ENCODE measurements at regions of chr11 and their contacts with region 1.

Region 1: DNA sequence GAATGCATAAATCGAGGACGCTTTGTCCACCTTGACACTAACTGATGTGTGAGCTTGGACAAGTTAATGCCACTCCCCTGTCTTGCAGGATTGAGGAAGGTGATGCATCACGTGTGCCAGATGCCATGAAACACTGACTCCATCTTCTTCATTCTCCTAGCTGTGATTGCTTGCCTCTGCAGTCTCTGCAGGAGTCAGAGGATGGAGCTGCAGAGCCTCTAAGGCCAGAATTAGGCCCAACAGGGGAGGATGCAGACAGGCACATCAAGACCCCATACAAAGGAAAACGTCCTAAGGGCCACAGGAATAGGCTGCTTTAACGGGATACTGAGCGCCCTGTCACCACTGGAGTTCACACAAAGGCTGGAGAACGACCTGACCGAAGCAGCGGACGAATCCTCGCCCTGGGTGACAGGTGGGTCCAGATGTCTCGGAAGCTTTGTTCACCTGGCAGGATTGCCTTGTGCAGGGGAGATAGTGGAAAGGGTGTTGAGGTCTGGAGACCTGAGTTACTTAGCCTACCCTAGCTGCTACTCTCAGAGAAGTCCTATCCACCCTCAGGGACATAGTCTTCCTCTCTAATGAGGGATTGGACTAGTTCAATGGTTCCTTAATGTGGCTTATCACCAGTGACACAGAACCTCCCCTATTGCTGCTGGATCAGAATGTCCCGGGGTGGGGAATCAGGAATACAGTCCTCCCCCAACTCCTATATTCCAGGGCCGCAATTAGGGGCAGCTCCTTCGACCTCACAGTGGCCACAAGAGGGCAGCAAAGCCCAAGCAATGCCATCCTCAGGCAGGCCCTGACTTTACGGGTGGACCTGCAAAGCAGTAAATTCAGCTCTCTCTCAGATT is 32.4 kb downstream of the DBX1 start:
- DNase-seq: peak; percentile 68
- H3K4me3 ChIP-seq: no peak overlapping the region
- H3K27ac ChIP-seq: no peak overlapping the region
- H3K4me1 ChIP-seq: no peaks in the 10 kb centered on the region
- H3K27me3 ChIP-seq: no peaks in the 10 kb centered on the region
- CTCF ChIP-seq: peak; percentile 73

Region 2: DNA sequence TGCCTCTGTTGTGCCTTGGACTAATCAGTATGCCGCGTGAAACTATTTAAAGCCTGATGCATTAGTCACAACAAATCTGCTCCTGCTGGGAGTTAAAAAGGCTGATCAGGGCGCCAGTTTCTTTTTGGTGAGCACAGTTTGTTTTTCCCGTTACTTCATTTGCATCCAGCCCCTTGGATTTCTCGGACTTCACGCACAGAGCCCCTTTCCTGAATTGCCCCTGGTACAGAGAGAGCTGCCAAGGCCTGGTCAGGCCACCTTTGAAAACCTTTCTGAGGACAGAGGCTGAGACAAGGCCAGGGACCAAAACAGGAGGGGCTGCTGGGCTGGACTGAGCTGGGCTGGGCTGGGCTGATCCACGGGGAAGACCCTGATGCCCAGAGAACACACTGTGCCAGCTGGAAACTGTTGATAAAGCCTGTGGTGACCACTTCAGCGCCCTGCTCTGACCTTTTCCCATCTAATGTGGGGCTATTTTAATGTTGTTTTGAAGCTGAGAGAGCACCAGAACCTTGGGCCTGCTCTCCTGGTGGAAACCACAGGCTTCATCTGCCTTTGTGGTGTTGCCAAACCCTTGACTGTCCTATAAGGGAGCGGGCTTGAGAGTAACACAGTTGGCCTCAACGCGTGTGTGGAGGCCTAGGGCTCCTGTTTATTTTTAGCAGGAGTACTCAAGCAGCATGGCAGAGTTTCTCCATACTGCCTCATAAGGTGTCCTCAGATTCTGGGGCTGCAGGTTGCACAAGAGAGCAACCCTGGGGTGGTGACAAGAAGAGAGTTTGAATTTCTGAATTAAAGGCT is 371.0 kb before region 1 on chr11:
- CTCF ChIA-PET with region 1: no interaction called
- POLR2A ChIA-PET with region 1: no interaction called
- intact Hi-C with region 1: no loop called
- DNase-seq: no peak
- H3K4me3 ChIP-seq: no peak overlapping the region
- H3K27ac ChIP-seq: no peak overlapping the region
- H3K4me1 ChIP-seq: no peaks in the 10 kb centered on the region
- H3K27me3 ChIP-seq: no peaks in the 10 kb centered on the region
- CTCF ChIP-seq: no peak

Region 3: DNA sequence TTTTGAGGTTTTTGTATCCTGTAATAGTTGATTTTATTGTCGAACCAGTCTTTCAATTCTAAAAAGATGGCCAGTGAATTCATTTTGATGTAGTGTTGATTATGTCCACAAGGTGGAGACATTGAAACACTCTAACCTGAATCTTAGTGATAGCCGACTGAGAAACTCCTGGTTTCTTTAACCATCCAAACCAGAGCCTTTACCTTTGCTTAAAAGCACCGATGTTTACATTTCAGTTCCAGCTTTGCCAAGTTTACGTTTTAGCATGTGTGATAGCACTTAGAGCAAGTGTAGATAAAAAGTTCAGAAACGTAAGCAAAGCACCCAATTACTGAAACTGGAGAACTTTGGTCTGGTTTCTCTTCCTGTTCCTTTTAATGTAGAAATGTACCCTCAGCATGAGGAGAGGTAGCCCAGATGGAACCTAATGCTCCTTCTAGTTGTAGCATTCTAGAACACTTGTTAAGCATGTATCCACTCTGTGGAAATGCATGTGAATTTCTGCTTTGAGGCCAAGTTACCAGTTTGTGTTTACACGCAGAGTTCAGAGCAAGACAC is 176.3 kb before region 1 on chr11:
- CTCF ChIA-PET with region 1: interaction called, 3 read pairs
- POLR2A ChIA-PET with region 1: no interaction called
- intact Hi-C with region 1: loop called (anchors 5 kb)
- DNase-seq: peak; percentile 46
- H3K4me3 ChIP-seq: no peak overlapping the region
- H3K27ac ChIP-seq: no peak overlapping the region
- H3K4me1 ChIP-seq: no peaks in the 10 kb centered on the region
- H3K27me3 ChIP-seq: peaks cover 21% of the 10 kb centered on the region
- CTCF ChIP-seq: peak; percentile 62

Region 4: DNA sequence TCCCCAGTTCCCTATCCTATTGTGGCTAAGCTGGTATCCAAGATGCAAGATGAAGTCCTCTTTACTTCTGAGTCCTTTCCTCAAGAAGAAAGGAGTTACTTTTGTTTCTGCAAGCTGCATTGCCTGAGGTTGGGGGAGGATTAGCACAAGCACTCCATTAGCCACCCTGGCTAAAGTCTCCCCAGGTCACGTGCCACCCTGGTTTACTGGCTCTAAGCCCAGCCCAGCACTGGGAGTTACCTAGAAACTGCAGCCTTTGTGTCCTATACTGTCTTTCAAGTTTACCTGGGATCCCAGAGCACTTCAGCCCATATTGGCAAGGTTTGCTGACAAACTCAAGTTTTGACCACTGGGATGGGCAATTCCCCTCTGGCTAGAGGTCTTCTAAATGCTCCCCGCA is 110.8 kb after region 1 on chr11:
- CTCF ChIA-PET with region 1: no interaction called
- POLR2A ChIA-PET with region 1: no interaction called
- intact Hi-C with region 1: no loop called
- DNase-seq: no peak
- H3K4me3 ChIP-seq: no peak overlapping the region
- H3K27ac ChIP-seq: no peak overlapping the region
- H3K4me1 ChIP-seq: no peaks in the 10 kb centered on the region
- H3K27me3 ChIP-seq: no peaks in the 10 kb centered on the region
- CTCF ChIP-seq: no peak

Region 5: DNA sequence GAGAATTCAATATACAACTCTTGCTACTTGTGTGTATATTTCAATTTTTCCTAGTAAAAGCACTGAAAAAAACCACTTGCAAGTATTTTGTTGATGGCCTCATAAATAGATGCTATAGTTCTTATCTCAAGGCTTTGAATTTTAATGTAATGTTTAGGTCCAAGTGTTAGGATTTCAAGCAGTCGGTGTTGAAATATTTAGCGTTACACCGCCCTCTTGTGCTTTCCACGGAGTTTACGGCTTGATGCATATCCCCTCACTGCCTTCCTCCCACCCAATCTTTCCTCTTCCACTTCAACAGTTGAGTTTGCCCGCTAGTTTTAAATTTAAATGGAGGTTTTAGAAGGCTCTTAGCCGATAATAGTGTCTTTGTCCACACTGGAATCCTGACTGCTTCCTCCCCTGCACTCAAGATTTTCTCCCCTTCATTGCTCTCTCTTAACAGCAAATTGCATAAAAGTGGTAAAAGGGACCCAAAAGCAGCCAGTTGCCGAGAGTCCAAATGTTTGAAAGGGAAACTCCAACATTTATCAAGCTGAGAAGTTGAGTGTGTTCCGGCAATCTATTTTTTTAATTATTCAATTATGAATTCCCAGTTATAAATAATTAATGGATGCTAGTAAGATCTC is 209.7 kb after region 1 on chr11:
- CTCF ChIA-PET with region 1: no interaction called
- POLR2A ChIA-PET with region 1: no interaction called
- intact Hi-C with region 1: loop called (anchors 5 kb)
- DNase-seq: peak; percentile 46
- H3K4me3 ChIP-seq: no peak overlapping the region
- H3K27ac ChIP-seq: no peak overlapping the region
- H3K4me1 ChIP-seq: no peaks in the 10 kb centered on the region
- H3K27me3 ChIP-seq: peaks cover 52% of the 10 kb centered on the region
- CTCF ChIP-seq: peak; percentile 61

Region 6: DNA sequence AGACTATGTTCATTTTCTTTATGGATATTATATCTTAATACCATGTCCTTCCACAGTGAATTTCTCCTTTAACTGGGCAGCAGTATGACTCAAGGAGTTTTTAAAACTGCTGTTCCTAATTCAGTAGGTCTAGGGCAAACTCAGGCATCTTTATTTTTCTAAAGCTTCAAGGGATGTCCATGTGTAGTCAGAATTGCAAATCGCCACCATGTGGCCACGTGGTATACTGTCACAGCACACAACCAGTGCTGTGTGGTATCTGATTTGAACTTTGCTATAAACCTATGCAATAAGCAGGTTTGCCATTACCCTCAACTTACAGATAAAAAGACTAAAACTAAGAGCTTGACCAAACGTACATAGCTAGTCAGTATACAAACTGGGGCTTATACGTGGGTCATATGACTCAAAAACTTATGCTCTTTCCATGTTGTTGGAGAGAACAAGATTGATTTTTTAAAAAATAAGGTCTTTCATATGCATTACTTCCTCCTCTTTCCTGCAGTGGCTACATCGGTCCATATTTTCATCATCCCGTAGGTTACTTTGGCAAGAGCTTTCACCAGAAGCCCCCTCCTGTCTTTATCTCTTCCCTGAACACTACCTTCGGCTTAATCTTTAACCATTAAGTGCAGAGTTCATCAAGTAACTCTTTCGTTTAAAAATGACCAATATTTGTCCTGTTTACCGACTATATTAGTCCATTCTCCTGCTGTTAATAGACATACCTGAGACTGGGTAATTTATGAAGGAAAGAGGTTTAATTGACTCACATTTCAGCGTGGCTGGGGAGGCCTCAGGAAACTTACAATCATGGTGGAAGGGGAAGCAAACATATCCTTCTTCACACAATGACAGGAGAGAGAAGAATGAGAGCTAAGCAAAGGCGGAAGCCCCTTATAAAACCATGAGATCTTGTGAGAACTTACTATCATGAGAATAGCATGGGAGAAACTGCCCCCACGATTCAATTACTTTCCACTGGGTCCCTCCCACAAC is 227.6 kb after region 1 on chr11:
- CTCF ChIA-PET with region 1: interaction called, 41 read pairs
- POLR2A ChIA-PET with region 1: no interaction called
- intact Hi-C with region 1: loop called (anchors 1 kb)
- DNase-seq: peak; percentile 59
- H3K4me3 ChIP-seq: no peak overlapping the region
- H3K27ac ChIP-seq: no peak overlapping the region
- H3K4me1 ChIP-seq: no peaks in the 10 kb centered on the region
- H3K27me3 ChIP-seq: no peaks in the 10 kb centered on the region
- CTCF ChIP-seq: peak; percentile 68

Region 7: GRCh38 chr11:20609727-20610707 is 482.1 kb after region 1 on chr11:
- CTCF ChIA-PET with region 1: interaction called, 6 read pairs
- POLR2A ChIA-PET with region 1: no interaction called
- intact Hi-C with region 1: loop called (anchors 10 kb)
- DNase-seq: peak; percentile 84
- H3K4me3 ChIP-seq: peak overlapping the region; percentile 24
- H3K27ac ChIP-seq: no peak overlapping the region
- H3K4me1 ChIP-seq: no peaks in the 10 kb centered on the region
- H3K27me3 ChIP-seq: peaks cover 40% of the 10 kb centered on the region
- CTCF ChIP-seq: peak; percentile 90